Mammary epithelial cell (primary cell): ENCODE measurements at regions of chr22 and their contacts with region 1.

Region 1: DNA sequence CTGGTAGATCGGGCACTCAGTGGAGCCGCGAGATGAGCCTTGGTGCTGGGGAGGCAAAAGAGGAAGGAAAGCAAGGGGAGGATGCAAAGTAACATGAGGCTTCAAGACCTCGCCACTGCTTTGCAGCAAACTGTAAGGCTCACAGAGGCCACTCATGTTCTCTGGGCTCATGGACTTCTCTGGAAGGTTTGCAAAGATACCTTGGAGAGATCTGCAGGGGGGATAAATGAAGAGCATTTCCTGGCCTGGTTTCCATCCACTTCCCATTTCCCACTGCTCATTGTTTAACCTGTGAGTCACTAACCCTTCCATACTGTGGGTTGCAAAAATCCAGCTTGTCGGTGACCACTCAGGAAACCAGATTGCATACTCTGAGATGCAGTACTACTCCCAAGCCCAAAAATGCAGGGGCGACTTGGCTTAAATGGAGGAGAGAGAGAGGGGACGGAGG is 38.5 kb downstream of the OSBP2 start:
- DNase-seq: no peak
- H3K4me3 ChIP-seq: no peak overlapping the region
- H3K27ac ChIP-seq: no peak overlapping the region
- H3K4me1 ChIP-seq: peaks cover 2% of the 10 kb centered on the region
- H3K27me3 ChIP-seq: peaks cover 2% of the 10 kb centered on the region
- CTCF ChIP-seq: no peak

Region 2: DNA sequence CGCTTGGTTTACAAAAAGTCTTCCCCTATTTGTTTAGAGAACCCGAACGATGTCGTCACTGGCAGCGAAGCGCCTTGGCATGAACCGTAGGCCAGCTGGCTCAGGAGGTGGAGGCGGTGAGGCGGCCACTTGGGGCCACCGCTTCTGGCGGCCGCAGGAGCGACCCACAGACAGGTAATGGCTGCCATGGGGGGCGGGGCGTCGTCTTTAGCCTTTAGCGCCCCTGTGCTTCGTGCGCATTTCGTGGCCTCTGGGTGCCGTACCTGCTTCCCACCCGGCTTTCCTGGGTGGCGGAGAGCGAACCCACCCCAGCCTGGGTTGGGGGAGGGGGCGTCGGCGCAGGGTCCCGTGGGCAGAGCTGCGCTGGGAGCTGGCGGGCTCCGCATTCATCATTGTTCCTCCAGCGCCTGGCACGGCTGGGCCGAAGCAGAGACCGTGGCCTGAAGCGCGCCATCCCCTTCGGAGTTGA is 39.0 kb before region 1 on chr22:
- CTCF ChIA-PET with region 1: no interaction called
- dilution Hi-C with region 1: loop called (anchors 5 kb)
- in situ Hi-C with region 1: no loop called
- intact Hi-C with region 1: no loop called
- DNase-seq: peak; percentile 21
- H3K4me3 ChIP-seq: peak overlapping the region; percentile 40 to 70 (median 70)
- H3K27ac ChIP-seq: no peak overlapping the region
- H3K4me1 ChIP-seq: peaks cover 3% of the 10 kb centered on the region
- H3K27me3 ChIP-seq: no peaks in the 10 kb centered on the region
- CTCF ChIP-seq: no peak